Activated T-helper 2 cell treated with anti-CD3 and anti-CD28 coated beads, Interferon-gamma antibody, Interleukin-2, Interleukin-4, amounts not matched to agents 10 μg/mL and 5 μg/mL and 100 μg/mL, durations not matched to agents 14 hours and 24 hours and 36 hours (primary cell): ENCODE measurements at regions of chrX and their contacts with region 1.

Region 1: DNA sequence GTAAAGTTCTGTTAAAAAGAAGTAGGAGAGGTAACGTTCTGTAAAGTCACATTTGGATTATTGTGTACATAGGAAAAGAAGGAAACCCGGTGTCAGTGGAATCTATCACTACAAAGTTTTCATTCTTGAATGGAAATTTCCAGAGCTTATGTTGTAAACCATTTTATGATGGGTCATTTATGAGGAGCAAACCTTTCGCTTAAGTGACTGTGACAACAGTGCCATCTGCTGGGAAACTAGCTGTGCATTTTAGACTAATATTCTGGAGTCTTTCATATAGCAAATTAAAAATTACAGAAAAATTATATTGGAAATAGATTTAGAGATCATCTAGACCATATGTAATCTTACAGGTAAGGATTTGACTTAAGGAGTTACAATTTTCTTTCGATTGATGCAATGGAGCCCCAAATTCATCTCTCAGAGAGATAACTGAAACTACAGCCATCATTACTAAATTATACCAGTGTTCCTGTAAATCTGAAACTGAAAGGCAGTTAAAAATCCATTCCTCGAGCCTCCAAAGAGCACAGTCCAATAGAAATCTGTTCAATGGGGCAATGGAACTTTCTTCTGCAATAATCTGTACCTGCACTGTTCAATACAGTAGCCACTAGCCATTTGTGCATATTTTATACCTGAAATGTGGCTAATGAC is 26.9 kb downstream of the ASB9 start:
- DNase-seq: no peak
- H3K4me3 Mint-ChIP-seq: no peak overlapping the region
- H3K27ac Mint-ChIP-seq: no peak overlapping the region
- H3K4me1 Mint-ChIP-seq: peaks cover 10% of the 10 kb centered on the region
- H3K27me3 Mint-ChIP-seq: peaks cover 2% of the 10 kb centered on the region

Region 2: GRCh38 chrX:14039344-14039743 is 1203.7 kb before region 1 on chrX:
- intact Hi-C with region 1: loop called (anchors 1 kb)
- DNase-seq: peak; percentile 23
- H3K4me3 Mint-ChIP-seq: no peak overlapping the region
- H3K27ac Mint-ChIP-seq: no peak overlapping the region
- H3K4me1 Mint-ChIP-seq: no peaks in the 10 kb centered on the region
- H3K27me3 Mint-ChIP-seq: peaks cover 16% of the 10 kb centered on the region

Region 3: DNA sequence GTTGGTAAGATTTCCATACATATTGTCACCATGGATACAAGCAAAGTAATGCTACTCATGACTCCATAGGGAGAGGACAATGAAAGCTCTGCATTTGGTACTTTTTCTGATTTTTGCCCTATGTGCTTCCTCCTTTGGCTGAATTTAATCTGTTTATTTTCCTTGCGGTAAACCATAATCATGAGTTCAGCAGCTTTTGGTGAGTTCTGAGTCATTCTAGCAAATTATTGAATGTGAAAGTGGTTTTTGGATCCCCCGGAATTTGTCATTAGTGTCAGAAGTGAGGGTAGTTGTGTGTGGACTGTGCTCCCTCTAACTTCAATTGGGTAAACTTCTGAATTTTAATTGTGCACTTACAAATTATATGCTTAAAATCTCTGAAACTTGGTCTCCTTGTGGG is 199.5 kb before region 1 on chrX:
- intact Hi-C with region 1: loop called (anchors 10 kb)
- DNase-seq: no peak
- H3K4me3 Mint-ChIP-seq: no peak overlapping the region
- H3K27ac Mint-ChIP-seq: no peak overlapping the region
- H3K4me1 Mint-ChIP-seq: peaks cover 5% of the 10 kb centered on the region
- H3K27me3 Mint-ChIP-seq: peaks cover 3% of the 10 kb centered on the region

Region 4: DNA sequence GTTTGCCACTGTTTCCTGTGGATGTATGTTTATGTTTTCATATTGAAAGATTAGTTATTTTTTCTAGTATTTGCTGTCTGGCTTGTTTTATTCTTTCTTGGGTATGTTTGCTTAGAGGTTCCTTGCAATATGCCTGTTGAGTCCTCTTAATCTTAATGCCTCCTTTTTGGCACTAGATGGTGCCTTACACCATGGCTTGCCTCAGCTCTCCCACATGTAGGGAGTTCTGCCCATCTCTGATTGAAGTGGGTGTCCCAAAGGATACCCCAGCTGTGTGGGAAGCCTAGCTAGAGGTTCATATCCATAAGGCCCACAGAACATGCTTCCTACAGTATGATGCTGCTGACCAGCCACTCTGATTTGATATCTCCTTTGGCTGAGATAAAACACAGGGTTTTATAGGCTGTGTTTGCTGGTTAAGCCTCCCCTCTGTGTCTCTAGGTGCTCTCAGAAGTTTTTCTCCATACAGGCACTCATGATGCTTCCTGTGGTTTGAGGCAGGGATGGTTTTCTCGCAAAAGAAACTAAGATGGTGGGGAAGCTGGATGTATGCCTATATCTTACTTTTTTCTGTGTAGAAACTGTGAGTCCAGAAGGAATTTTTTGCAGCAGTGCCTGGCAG is 135.5 kb before region 1 on chrX:
- intact Hi-C with region 1: loop called (anchors 1 kb)
- DNase-seq: no peak
- H3K4me3 Mint-ChIP-seq: no peak overlapping the region
- H3K27ac Mint-ChIP-seq: no peak overlapping the region
- H3K4me1 Mint-ChIP-seq: peaks cover 5% of the 10 kb centered on the region
- H3K27me3 Mint-ChIP-seq: peaks cover 3% of the 10 kb centered on the region

Region 5: GRCh38 chrX:15143050-15143824 is 99.8 kb before region 1 on chrX:
- intact Hi-C with region 1: loop called (anchors 5 kb)
- DNase-seq: peak; percentile 9
- H3K4me3 Mint-ChIP-seq: no peak overlapping the region
- H3K27ac Mint-ChIP-seq: no peak overlapping the region
- H3K4me1 Mint-ChIP-seq: peaks cover 16% of the 10 kb centered on the region
- H3K27me3 Mint-ChIP-seq: peaks cover 7% of the 10 kb centered on the region

Region 6: DNA sequence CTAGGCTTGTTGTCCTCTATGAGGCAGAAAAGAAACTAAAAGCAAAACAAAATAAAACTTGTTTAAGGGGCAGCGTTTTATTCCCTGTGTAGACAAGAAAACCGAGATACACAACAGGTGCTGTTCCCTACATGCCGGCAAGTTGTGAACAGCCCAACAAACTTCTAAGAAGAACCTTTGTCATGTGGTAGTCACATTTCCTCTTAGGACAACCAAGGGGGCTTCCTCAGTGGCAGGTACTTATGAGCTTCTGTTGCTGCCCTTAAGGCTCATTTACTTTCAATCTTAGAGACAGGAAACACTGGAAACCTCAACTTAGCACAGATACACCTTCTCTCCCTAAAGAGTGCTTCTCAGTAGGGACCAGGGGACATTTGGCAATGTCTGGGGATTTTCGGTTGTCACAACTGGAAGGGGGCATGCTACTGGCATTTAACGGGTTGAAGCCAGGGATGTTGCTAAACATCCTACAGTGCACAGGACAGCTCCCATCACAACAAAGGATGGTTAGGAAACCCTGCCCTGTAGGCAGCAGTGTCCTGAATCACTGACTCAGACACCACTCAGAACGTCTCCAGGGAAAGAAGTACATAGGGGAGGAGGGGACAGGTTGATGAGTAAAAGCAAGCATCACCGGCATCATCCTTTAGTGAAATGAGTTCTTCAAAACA is 84.2 kb before region 1 on chrX:
- intact Hi-C with region 1: loop called (anchors 1 kb)
- DNase-seq: peak; percentile 8
- H3K4me3 Mint-ChIP-seq: peak overlapping the region; percentile 78
- H3K27ac Mint-ChIP-seq: peak overlapping the region; percentile 86
- H3K4me1 Mint-ChIP-seq: peaks cover 23% of the 10 kb centered on the region
- H3K27me3 Mint-ChIP-seq: peaks cover 4% of the 10 kb centered on the region